ENCODE measurements at regions of chr7 and their contacts with region 1.

Region 1: GRCh38 chr7:5557920-5558401 is 134.3 kb upstream of the TNRC18 start:
- DNase-seq: peak; percentile 45
- ATAC-seq: peak; percentile 13
- H3K4me3 Mint-ChIP-seq: peak overlapping the region; percentile 87
- H3K27ac Mint-ChIP-seq: peak overlapping the region; percentile 93
- H3K4me1 Mint-ChIP-seq: peaks cover 49% of the 10 kb centered on the region
- H3K27me3 Mint-ChIP-seq: no peaks in the 10 kb centered on the region
- CTCF ChIP-seq: no peak

Region 2: GRCh38 chr7:5387711-5388245 is 170.2 kb before region 1 on chr7:
- CTCF ChIA-PET with region 1: no interaction called
- POLR2A ChIA-PET with region 1: no interaction called
- intact Hi-C with region 1: no loop called
- DNase-seq: no peak
- ATAC-seq: no peak
- H3K4me3 Mint-ChIP-seq: no peak overlapping the region
- H3K27ac Mint-ChIP-seq: no peak overlapping the region
- H3K4me1 Mint-ChIP-seq: peaks cover 11% of the 10 kb centered on the region
- H3K27me3 Mint-ChIP-seq: no peaks in the 10 kb centered on the region
- CTCF ChIP-seq: no peak

Region 3: GRCh38 chr7:5450549-5451372 is 107.2 kb before region 1 on chr7:
- CTCF ChIA-PET with region 1: no interaction called
- POLR2A ChIA-PET with region 1: no interaction called
- intact Hi-C with region 1: no loop called
- DNase-seq: peak; percentile 31
- ATAC-seq: peak; percentile 75
- H3K4me3 Mint-ChIP-seq: no peak overlapping the region
- H3K27ac Mint-ChIP-seq: no peak overlapping the region
- H3K4me1 Mint-ChIP-seq: peaks cover 1% of the 10 kb centered on the region
- H3K27me3 Mint-ChIP-seq: peaks cover 2% of the 10 kb centered on the region
- CTCF ChIP-seq: no peak

Region 4: DNA sequence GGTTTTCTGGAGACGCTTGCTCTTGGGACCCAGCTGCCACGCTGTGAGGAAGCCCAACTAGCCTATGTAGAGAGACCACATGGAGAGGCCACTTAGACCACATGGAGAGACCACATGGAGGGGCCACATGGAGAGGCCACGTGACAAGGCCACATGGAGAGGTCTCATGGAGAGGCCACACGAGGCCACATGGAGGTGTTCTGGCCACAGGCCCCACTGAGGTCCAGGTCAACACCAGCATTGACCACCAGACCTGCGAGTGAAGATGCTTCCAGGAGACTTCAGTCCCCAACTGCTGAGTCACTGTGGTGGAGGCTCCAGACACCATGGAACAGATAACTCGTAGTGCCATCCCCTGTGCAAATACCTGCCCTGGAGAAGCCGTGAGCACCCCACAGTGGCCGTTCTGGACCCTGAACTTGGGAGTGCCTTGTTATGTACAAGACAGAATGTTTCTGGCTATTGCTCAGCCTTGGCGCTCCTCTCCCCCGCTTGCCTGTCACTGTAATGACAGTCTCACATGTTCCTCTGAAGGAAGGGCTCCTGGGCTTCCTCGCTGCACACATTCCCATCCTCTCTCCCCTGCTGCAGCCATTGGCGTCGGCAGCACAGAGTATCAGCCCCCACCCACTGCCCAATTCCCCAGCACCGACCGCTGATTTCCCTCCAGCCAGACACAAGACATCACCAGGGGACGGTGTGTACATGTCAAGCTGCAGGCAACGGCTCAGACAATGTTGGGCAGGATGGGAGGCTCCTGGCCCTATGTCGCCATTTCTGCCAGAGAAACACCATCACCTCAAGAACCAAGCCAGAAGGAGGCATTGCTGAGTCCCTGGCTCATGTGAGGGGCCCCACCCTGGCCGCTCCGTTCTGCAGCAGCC is 85.3 kb before region 1 on chr7:
- CTCF ChIA-PET with region 1: no interaction called
- POLR2A ChIA-PET with region 1: no interaction called
- intact Hi-C with region 1: no loop called
- DNase-seq: no peak
- ATAC-seq: no peak
- H3K4me3 Mint-ChIP-seq: no peak overlapping the region
- H3K27ac Mint-ChIP-seq: no peak overlapping the region
- H3K4me1 Mint-ChIP-seq: no peaks in the 10 kb centered on the region
- H3K27me3 Mint-ChIP-seq: no peaks in the 10 kb centered on the region
- CTCF ChIP-seq: no peak

Region 5: GRCh38 chr7:5494683-5495561 is 63.0 kb before region 1 on chr7:
- CTCF ChIA-PET with region 1: interaction called, 96 read pairs
- POLR2A ChIA-PET with region 1: interaction called, 14 read pairs
- intact Hi-C with region 1: loop called (anchors 1 kb)
- DNase-seq: peak; percentile 71
- ATAC-seq: peak; percentile 82
- H3K4me3 Mint-ChIP-seq: peak overlapping the region; percentile 71
- H3K27ac Mint-ChIP-seq: no peak overlapping the region
- H3K4me1 Mint-ChIP-seq: peaks cover 21% of the 10 kb centered on the region
- H3K27me3 Mint-ChIP-seq: no peaks in the 10 kb centered on the region
- CTCF ChIP-seq: peak; percentile 42

Region 6: GRCh38 chr7:5526100-5526905 is 31.7 kb before region 1 on chr7:
- CTCF ChIA-PET with region 1: interaction called, 53 read pairs
- POLR2A ChIA-PET with region 1: no interaction called
- intact Hi-C with region 1: no loop called
- DNase-seq: peak; percentile 33
- ATAC-seq: no peak
- H3K4me3 Mint-ChIP-seq: peak overlapping the region; percentile 95
- H3K27ac Mint-ChIP-seq: peak overlapping the region; percentile 80
- H3K4me1 Mint-ChIP-seq: peaks cover 46% of the 10 kb centered on the region
- H3K27me3 Mint-ChIP-seq: no peaks in the 10 kb centered on the region
- CTCF ChIP-seq: no peak

Region 7: DNA sequence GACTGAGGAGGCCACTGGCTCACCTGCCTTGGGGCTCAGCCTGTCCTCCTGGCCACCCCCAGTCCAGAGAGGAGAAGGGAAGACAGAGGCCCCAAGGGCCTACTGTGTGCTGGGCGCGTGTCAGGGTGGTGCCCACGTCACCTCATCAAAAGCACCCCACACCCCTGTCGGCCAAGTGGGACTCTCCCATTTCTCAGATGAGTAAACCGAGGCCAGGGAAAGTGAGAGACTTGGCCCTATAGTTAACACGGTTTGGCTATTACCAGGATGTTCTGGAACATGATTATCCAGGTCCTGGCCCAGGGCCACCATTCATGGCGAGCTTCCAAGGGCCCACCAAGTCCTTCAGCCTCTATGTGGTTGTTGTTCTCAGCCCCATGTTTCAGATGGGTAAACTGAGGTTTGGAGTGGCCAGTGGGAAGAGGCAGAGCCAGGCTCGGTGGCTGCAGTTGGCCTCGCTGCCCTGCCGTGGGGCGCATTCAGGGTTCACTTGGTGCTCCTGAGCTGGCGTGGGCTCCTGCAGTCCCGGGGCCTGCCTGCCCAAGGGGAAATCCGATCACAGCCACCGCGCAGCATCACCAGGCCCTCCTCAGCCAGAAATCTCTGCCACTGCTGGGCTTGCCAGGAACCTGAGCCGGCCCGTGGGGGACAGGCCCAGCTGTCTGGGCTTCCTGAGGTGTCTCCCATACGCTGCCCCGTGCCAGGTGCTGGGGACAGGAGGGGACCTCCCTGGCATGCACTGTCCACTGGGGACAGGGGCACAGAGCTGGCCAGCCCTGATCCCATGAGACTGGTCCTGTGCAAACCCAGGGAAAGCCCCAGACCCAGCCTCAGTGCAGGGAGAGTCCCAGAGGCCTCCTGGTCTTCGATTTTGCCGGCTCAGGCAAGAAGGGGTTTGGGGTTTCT is 16.6 kb before region 1 on chr7:
- CTCF ChIA-PET with region 1: interaction called, 13 read pairs
- POLR2A ChIA-PET with region 1: interaction called, 6 read pairs
- intact Hi-C with region 1: no loop called
- DNase-seq: peak; percentile 50
- ATAC-seq: peak; percentile 73
- H3K4me3 Mint-ChIP-seq: peak overlapping the region; percentile 68
- H3K27ac Mint-ChIP-seq: peak overlapping the region; percentile 86
- H3K4me1 Mint-ChIP-seq: peaks cover 30% of the 10 kb centered on the region
- H3K27me3 Mint-ChIP-seq: no peaks in the 10 kb centered on the region
- CTCF ChIP-seq: no peak

Region 8: DNA sequence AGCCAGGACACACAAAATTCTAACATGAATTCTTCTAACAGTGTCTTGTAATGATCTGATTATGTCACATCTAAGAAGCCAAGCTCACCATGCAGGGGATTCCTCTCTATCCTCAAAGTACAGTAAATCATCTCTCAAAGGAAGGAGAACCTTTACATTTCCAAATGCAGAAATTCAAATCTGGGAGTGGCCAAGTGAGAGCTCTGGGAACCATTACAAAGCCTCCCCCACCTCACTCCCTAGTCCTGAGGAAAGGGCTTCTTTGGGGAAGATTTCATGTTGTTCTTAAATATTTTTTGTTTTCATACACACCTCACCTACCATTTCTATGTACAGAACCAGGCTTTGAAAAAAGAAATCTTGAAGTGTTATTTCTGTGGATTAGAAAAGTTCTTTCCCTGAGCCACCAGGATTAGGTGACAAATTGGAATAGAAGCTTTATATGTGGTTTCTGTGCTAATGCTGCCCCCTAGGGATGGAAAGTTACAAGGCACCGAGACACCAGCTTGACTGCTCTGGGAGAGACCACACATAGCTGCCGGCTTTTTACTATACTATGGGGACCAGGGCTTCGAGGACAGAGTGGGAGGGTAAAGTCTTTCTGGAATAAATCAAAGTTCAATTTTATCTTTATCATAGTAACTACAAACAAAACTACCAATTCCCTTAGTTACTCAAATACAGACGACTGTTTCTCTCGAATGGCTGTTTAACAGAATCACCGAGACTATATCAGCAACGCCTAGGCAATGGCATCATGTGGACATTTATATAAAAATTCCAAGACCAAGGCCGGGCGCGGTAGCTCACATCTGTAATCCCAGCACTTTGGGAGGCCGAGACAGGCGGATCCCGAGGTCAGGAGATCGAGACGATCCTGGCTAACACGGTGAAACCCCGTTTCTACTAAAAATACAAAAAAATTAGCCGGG is 107.4 kb after region 1 on chr7:
- CTCF ChIA-PET with region 1: interaction called, 17 read pairs
- POLR2A ChIA-PET with region 1: no interaction called
- intact Hi-C with region 1: no loop called
- DNase-seq: no peak
- ATAC-seq: peak; percentile 71
- H3K4me3 Mint-ChIP-seq: no peak overlapping the region
- H3K27ac Mint-ChIP-seq: no peak overlapping the region
- H3K4me1 Mint-ChIP-seq: peaks cover 28% of the 10 kb centered on the region
- H3K27me3 Mint-ChIP-seq: no peaks in the 10 kb centered on the region
- CTCF ChIP-seq: no peak

Region 9: GRCh38 chr7:5704534-5704922 is 146.6 kb after region 1 on chr7:
- CTCF ChIA-PET with region 1: no interaction called
- POLR2A ChIA-PET with region 1: interaction called, 13 read pairs
- intact Hi-C with region 1: no loop called
- DNase-seq: peak; percentile 49
- ATAC-seq: peak; percentile 31
- H3K4me3 Mint-ChIP-seq: no peak overlapping the region
- H3K27ac Mint-ChIP-seq: no peak overlapping the region
- H3K4me1 Mint-ChIP-seq: peaks cover 40% of the 10 kb centered on the region
- H3K27me3 Mint-ChIP-seq: no peaks in the 10 kb centered on the region
- CTCF ChIP-seq: peak; percentile 78

Region 10: DNA sequence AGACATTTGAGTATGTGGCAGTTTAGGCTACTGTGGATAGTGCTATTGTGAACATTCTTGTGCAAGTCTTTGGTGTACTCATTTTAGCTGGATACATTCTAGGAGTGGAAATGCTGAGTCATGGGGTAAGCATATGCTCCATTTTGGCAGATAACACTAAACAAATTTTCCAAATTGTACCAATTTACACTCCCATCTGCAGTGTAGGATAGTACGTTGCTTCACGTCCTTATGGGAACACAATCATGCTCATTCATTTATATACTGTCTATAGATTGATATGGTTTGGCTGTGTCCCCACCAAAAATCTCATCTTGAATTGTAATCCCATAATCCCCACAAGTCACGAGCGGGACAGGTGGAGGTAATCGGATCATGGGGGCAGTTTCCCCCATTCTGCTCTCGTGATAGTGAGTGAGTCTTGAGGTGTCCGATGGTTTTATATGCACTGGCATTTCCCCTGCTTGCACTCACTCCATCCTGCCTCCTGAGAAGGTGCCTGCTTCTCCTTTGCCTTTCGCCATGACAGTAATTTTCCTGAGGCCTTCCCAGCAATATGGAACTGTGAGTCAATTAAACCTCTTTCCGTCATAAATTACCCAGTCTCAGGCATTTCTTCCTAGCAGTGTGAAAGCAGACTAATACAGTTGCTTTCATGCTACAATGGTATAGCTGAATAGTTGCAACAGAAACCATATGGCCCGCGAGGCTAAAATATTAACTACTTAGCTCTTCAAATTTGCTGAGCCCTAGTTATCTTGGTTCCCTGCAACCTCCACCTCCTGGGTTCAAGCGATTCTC is 197.9 kb after region 1 on chr7:
- CTCF ChIA-PET with region 1: no interaction called
- POLR2A ChIA-PET with region 1: interaction called, 11 read pairs
- intact Hi-C with region 1: no loop called
- DNase-seq: no peak
- ATAC-seq: no peak
- H3K4me3 Mint-ChIP-seq: no peak overlapping the region
- H3K27ac Mint-ChIP-seq: no peak overlapping the region
- H3K4me1 Mint-ChIP-seq: peaks cover 6% of the 10 kb centered on the region
- H3K27me3 Mint-ChIP-seq: no peaks in the 10 kb centered on the region
- CTCF ChIP-seq: no peak